ENCODE measurements at regions of chrX and their contacts with region 1.

Region 1: DNA sequence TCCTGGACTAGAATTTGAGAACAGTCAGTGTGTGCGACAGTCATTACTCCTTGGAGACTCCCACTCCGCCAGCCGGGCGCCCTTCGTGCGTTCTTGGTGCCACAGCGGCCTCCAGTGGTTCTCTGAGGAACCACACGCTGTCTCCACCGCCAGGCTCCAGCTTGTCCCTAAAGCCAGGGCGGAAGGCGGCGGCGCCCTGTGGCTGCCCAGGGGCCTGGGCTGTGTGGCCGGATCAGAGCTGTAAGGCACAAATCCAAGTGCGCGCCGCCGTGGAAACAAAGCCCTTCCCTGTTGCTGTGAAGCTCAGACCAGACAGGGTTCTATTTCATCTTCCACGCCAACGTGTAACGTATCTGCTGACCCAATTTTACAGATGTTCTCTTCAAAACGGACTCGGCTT is 34.2 kb downstream of the IDS start:
- DNase-seq: peak; percentile 82
- ATAC-seq: peak; percentile 99
- H3K4me3 Mint-ChIP-seq: no peak overlapping the region
- H3K27ac Mint-ChIP-seq: no peak overlapping the region
- H3K4me1 Mint-ChIP-seq: peaks cover 3% of the 10 kb centered on the region; the same call in 1 of the 2 replicates
- H3K27me3 Mint-ChIP-seq: no peaks in the 10 kb centered on the region
- CTCF ChIP-seq: peak; percentile 74

Region 2: GRCh38 chrX:149286940-149287349 is 184.0 kb before region 1 on chrX:
- CTCF ChIA-PET with region 1: interaction called, 10 read pairs
- POLR2A ChIA-PET with region 1: no interaction called
- DNase-seq: peak; percentile 28
- ATAC-seq: peak; percentile 50
- H3K4me3 Mint-ChIP-seq: no peak overlapping the region
- H3K27ac Mint-ChIP-seq: no peak overlapping the region
- H3K4me1 Mint-ChIP-seq: no peaks in the 10 kb centered on the region
- H3K27me3 Mint-ChIP-seq: no peaks in the 10 kb centered on the region
- CTCF ChIP-seq: peak; percentile 47

Region 3: GRCh38 chrX:149306445-149306844 is 164.5 kb before region 1 on chrX:
- CTCF ChIA-PET with region 1: interaction called, 13 read pairs
- POLR2A ChIA-PET with region 1: no interaction called
- DNase-seq: no peak
- ATAC-seq: no peak
- H3K4me3 Mint-ChIP-seq: no peak overlapping the region
- H3K27ac Mint-ChIP-seq: no peak overlapping the region
- H3K4me1 Mint-ChIP-seq: no peaks in the 10 kb centered on the region
- H3K27me3 Mint-ChIP-seq: no peaks in the 10 kb centered on the region
- CTCF ChIP-seq: no peak